Right ventricle myocardium superior (tissue), 1 donor: ENCODE measurements at regions of chr7 and their contacts with region 1.

Region 1: GRCh38 chr7:70693686-70694360 is 438.1 kb upstream of the GALNT17 start:
- DNase-seq: peak; percentile 86
- ATAC-seq: peak; percentile 93

Region 2: DNA sequence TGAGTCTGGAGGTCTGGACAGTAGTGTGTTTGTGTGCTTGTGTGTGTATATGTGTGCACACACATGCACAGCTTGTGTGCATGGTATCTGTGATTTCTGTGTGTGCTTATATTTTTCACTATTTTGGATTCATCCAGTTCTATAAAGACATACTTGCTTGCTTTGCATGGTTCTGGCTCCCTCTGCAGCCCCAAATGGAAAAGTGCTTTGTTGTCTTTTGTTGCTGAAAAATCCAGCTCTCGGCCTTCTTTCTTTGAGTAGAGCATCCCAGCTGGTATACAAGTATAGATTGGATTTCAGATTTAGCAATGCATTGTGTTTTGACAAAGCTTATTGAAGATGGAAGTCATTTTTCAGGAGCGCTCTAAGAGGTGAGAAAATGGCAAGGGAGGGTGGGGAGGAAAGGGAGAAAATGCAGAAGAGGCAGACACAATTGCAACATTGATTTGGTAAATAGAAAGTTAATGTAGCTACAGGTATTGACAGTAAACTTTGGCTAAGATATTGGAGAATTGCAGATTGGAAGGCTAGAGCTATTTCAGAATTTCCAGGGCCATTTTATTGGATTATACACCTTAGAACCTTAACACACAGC is 761.7 kb before region 1 on chr7:
- intact Hi-C with region 1: loop called (anchors 10 kb)
- DNase-seq: no peak
- ATAC-seq: peak; percentile 73

Region 3: GRCh38 chr7:70040970-70041766 is 652.7 kb before region 1 on chr7:
- intact Hi-C with region 1: loop called (anchors 5 kb)
- DNase-seq: no peak
- ATAC-seq: no peak